ENCODE measurements at regions of chr1 and their contacts with region 1.

Region 1: DNA sequence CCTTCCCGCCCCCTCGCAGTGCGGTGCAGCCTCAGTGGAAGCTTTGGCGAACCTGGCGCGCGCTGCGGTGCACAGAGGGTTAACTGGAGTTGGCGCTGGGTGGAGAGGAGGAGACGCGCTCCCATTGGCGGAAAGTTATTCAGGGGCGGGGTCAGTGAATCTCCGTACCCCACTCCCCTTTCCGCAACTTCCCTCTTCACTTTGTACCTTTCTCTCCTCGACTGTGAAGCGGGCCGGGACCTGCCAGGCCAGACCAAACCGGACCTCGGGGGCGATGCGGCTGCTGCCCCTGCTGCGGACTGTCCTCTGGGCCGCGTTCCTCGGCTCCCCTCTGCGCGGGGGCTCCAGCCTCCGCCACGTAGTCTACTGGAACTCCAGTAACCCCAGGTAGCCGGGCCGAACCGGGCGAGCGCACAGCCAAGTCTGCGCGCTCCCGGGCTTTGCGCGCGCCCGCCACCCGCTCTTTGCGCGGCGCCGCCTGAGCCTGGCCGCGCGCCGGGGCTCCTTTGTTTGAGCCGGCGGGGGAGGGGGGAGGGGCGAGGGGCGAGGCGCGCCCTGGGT is at the start of gene EFNA4:
- DNase-seq: peak; percentile 62 to 87 (median 86)
- ATAC-seq: peak; percentile 93
- H3K4me3 ChIP-seq: peak within 1 kb of the TSS; percentile 76
- H3K4me3 Mint-ChIP-seq: peak within 1 kb of the TSS; percentile 85 to 99 (median 95)
- H3K27ac ChIP-seq: peak within 1 kb of the TSS; percentile 69
- H3K27ac Mint-ChIP-seq: peak within 1 kb of the TSS; percentile 17 to 96 (median 83)
- H3K4me1 ChIP-seq: peaks cover 20 to 21% of the 10 kb centered on the region in 2 donors
- H3K4me1 Mint-ChIP-seq: peaks cover 21 to 42% (median 39%) of the 10 kb centered on the region in 7 donors
- H3K27me3 ChIP-seq: no peaks in the 10 kb centered on the region
- H3K27me3 Mint-ChIP-seq: no peaks in the 10 kb centered on the region
- total RNA-seq, gene EFNA4: 3.9 to 9.4 (median 7.7) TPM

Region 2: GRCh38 chr1:154324669-154325582 is 738.7 kb before region 1 on chr1 and contains the start of gene ATP8B2:
- CTCF ChIA-PET with region 1: no interaction called
- POLR2A ChIA-PET with region 1: no interaction called
- intact Hi-C with region 1: loop called in 1 of 2 experiments (anchors 10 kb)
- DNase-seq: peak; percentile 60 to 82 (median 77)
- ATAC-seq: peak; percentile 80
- H3K4me3 ChIP-seq: peak within 1 kb of the TSS; percentile 79
- H3K4me3 Mint-ChIP-seq: peak within 1 kb of the TSS; percentile 92 to 98 (median 96)
- H3K27ac ChIP-seq: peak within 1 kb of the TSS; percentile 94
- H3K27ac Mint-ChIP-seq: peak within 1 kb of the TSS; percentile 80 to 95 (median 92)
- H3K4me1 ChIP-seq: peaks cover 24 to 36% of the 10 kb centered on the region in 2 donors
- H3K4me1 Mint-ChIP-seq: peaks cover 27 to 42% (median 38%) of the 10 kb centered on the region in 7 donors
- H3K27me3 ChIP-seq: no peaks in the 10 kb centered on the region
- H3K27me3 Mint-ChIP-seq: peaks cover 0 to 31% (median 0%) of the 10 kb centered on the region in 5 donors
- total RNA-seq, gene ATP8B2: 105 to 130 (median 117) TPM

Region 3: GRCh38 chr1:154669464-154670282 is 394.0 kb before region 1 on chr1:
- CTCF ChIA-PET with region 1: interaction called, 5 read pairs
- POLR2A ChIA-PET with region 1: no interaction called
- intact Hi-C with region 1: loop called (anchors 1 to 10 kb)
- DNase-seq: peak; percentile 40 to 81 (median 73)
- ATAC-seq: peak; percentile 100
- H3K4me3 ChIP-seq: no peak overlapping the region
- H3K4me3 Mint-ChIP-seq: no peak overlapping the region
- H3K27ac ChIP-seq: no peak overlapping the region
- H3K27ac Mint-ChIP-seq: peak overlapping the region in 1 of 9 donors; percentile 30
- H3K4me1 ChIP-seq: no peaks in the 10 kb centered on the region
- H3K4me1 Mint-ChIP-seq: peaks cover 0 to 13% (median 5%) of the 10 kb centered on the region in 7 donors
- H3K27me3 ChIP-seq: no peaks in the 10 kb centered on the region
- H3K27me3 Mint-ChIP-seq: peaks cover 0 to 4% (median 0%) of the 10 kb centered on the region in 5 donors

Region 4: GRCh38 chr1:154974063-154974807 is 89.4 kb before region 1 on chr1 and contains the start of gene CKS1B:
- CTCF ChIA-PET with region 1: interaction called, 3 read pairs
- POLR2A ChIA-PET with region 1: no interaction called
- intact Hi-C with region 1: loop called in 1 of 2 experiments (anchors 1 kb)
- DNase-seq: peak; percentile 86 to 100 (median 98)
- ATAC-seq: peak; percentile 89
- H3K4me3 ChIP-seq: peak within 1 kb of the TSS; percentile 82
- H3K4me3 Mint-ChIP-seq: no peak within 1 kb of the TSS
- H3K27ac ChIP-seq: peak within 1 kb of the TSS; percentile 94
- H3K27ac Mint-ChIP-seq: no peak within 1 kb of the TSS
- H3K4me1 ChIP-seq: peaks cover 28 to 35% of the 10 kb centered on the region in 2 donors
- H3K4me1 Mint-ChIP-seq: peaks cover 27 to 39% (median 31%) of the 10 kb centered on the region in 7 donors
- H3K27me3 ChIP-seq: no peaks in the 10 kb centered on the region
- H3K27me3 Mint-ChIP-seq: no peaks in the 10 kb centered on the region
- total RNA-seq, gene CKS1B: 8.4 to 105 (median 10.2) TPM

Region 5: GRCh38 chr1:155017041-155017945 is 46.3 kb before region 1 on chr1:
- CTCF ChIA-PET with region 1: interaction called, 18 read pairs
- POLR2A ChIA-PET with region 1: no interaction called
- intact Hi-C with region 1: no loop called
- DNase-seq: peak; percentile 85 to 93 (median 89)
- ATAC-seq: peak; percentile 98
- H3K4me3 ChIP-seq: peak overlapping the region; percentile 50
- H3K4me3 Mint-ChIP-seq: peak overlapping the region; percentile 51 to 84 (median 70)
- H3K27ac ChIP-seq: peak overlapping the region; percentile 83
- H3K27ac Mint-ChIP-seq: peak overlapping the region; percentile 38 to 98 (median 94)
- H3K4me1 ChIP-seq: peaks cover 38 to 65% of the 10 kb centered on the region in 2 donors
- H3K4me1 Mint-ChIP-seq: peaks cover 38 to 83% (median 71%) of the 10 kb centered on the region in 7 donors
- H3K27me3 ChIP-seq: no peaks in the 10 kb centered on the region
- H3K27me3 Mint-ChIP-seq: no peaks in the 10 kb centered on the region

Region 6: GRCh38 chr1:155078469-155079209 is 15.0 kb after region 1 on chr1 and contains the start of gene EFNA3:
- CTCF ChIA-PET with region 1: interaction called, 131 read pairs
- POLR2A ChIA-PET with region 1: interaction called, 51 read pairs
- intact Hi-C with region 1: loop called in 1 of 2 experiments (anchors 1 kb)
- DNase-seq: peak in 8 of 9 donors; percentile 39 to 85 (median 52)
- ATAC-seq: peak; percentile 82
- H3K4me3 ChIP-seq: peak within 1 kb of the TSS; percentile 48
- H3K4me3 Mint-ChIP-seq: peak within 1 kb of the TSS; percentile 79 to 92 (median 86)
- H3K27ac ChIP-seq: no peak within 1 kb of the TSS
- H3K27ac Mint-ChIP-seq: peak within 1 kb of the TSS; percentile 34 to 84 (median 56)
- H3K4me1 ChIP-seq: peaks cover 44 to 49% of the 10 kb centered on the region in 2 donors
- H3K4me1 Mint-ChIP-seq: peaks cover 23 to 68% (median 52%) of the 10 kb centered on the region in 7 donors
- H3K27me3 ChIP-seq: peaks cover 22% of the 10 kb centered on the region in 2 donors
- H3K27me3 Mint-ChIP-seq: peaks cover 8 to 46% (median 24%) of the 10 kb centered on the region in 5 donors
- total RNA-seq, gene EFNA3: 0.42 to 4.0 (median 2.7) TPM

Measured in naive thymus-derived CD4-positive, alpha-beta T cell (primary cell).